ENCODE measurements at regions of chr6 and their contacts with region 1.

Region 1: DNA sequence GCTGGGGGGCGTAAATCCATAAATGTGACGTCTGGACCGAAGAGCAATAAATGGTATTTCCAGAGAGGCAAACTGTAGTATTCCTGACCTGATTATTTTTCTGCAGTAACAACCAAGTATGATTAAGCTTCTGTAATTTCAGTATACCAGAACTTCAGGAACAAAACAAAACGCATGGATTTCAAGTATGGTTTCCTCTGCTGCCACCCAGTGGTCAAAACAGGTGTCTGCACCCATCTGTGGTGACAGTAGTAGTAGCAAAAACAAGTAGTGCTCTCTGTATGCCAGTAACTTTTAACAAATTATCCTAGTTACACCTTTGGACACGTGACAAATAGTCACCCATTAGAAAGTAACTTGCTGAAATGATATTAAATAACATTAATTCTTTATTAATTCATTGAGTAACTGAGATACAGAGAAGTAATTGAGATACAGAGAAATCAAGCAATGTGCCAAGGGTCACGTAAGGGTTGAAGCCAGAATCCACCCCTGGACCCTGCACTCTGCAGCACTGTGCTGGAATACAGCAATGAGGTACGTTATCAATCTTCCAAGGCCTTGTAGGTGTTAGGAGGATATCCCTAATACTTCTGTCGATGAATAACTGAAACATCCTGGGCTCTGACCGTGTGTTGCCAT is 7.9 kb downstream of the CALHM4 start:
- DNase-seq: peak; percentile 62 to 84 (median 67)
- ATAC-seq: peak; percentile 82
- H3K4me3 ChIP-seq: no peak overlapping the region
- H3K27ac ChIP-seq: no peak overlapping the region
- H3K4me1 ChIP-seq: peaks cover 15 to 17% of the 10 kb centered on the region in 2 experiments; a peak in 4 of 5 replicates
- H3K27me3 ChIP-seq: no peaks in the 10 kb centered on the region
- CTCF ChIP-seq: peak; percentile 76 to 88 (median 84)
- EP300 ChIP-seq: no peak
- POLR2A ChIP-seq: no peak
- RAD21 ChIP-seq: peak; percentile 81 to 85

Region 2: GRCh38 chr6:116287689-116288282 is 273.7 kb before region 1 on chr6:
- CTCF ChIA-PET with region 1: no interaction called
- POLR2A ChIA-PET with region 1: no interaction called
- in situ Hi-C with region 1: loop called (anchors 10 kb)
- intact Hi-C with region 1: loop called (anchors 2 kb)
- DNase-seq: peak; percentile 27 to 47 (median 44)
- ATAC-seq: peak; percentile 88
- H3K4me3 ChIP-seq: no peak overlapping the region
- H3K27ac ChIP-seq: no peak overlapping the region
- H3K4me1 ChIP-seq: no peaks in the 10 kb centered on the region; a peak in 1 of 5 replicates
- H3K27me3 ChIP-seq: 0 out of 5 replicates have a peak, but pooled peaks cover 0 to 5% of the 10 kb centered on the region in 2 experiments
- CTCF ChIP-seq: peak; percentile 66 to 88 (median 74); a peak in 5 of 6 replicates
- EP300 ChIP-seq: no peak
- POLR2A ChIP-seq: no peak
- RAD21 ChIP-seq: peak; percentile 86 to 90

Region 3: DNA sequence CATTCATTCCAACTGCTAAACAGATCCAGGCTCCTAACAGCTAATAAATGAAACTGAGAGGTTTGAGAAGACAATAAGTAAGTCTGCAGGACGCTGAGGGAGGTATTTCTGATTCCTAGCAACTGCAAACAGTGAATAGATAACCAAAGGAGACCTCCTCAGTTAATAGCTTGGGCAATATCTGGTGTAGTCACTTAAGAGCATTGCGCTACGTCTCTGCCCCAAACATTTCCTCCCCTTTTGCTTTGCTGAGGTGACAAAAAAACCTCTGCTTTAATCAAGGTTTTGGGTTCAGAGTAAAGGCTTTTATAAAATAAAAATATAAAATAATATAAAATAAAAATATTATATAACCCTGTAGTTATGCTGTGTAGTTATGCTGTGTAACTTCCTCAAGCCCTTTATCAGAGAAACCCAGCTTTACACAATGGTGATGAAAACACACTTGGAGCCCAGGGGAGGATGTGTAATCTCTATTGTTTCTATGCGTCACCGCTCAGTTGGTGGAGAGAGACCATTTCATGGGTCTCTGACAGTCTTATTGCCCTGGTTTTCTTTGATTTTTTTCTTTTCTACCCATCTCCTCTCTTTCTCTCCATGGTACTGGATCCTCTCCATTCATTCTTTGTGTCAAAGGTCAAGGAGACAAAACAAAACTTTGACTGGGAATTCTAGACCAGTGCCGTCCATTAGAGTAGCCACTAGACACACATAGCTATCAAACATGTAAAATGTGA is 69.0 kb before region 1 on chr6:
- CTCF ChIA-PET with region 1: no interaction called
- POLR2A ChIA-PET with region 1: no interaction called
- in situ Hi-C with region 1: no loop called
- intact Hi-C with region 1: no loop called
- DNase-seq: peak; percentile 15 to 88 (median 44)
- ATAC-seq: peak; percentile 97
- H3K4me3 ChIP-seq: no peak overlapping the region
- H3K27ac ChIP-seq: peak overlapping the region; percentile 82
- H3K4me1 ChIP-seq: peaks cover 0 to 11% of the 10 kb centered on the region in 2 experiments; a peak in 3 of 5 replicates
- H3K27me3 ChIP-seq: no peaks in the 10 kb centered on the region
- CTCF ChIP-seq: no peak
- EP300 ChIP-seq: peak; percentile 82
- POLR2A ChIP-seq: no peak
- RAD21 ChIP-seq: no peak

Region 4: GRCh38 chr6:116741571-116741970 is 180.1 kb after region 1 on chr6:
- CTCF ChIA-PET with region 1: no interaction called
- POLR2A ChIA-PET with region 1: no interaction called
- in situ Hi-C with region 1: no loop called
- intact Hi-C with region 1: no loop called
- DNase-seq: no peak
- ATAC-seq: no peak
- H3K4me3 ChIP-seq: no peak overlapping the region
- H3K27ac ChIP-seq: no peak overlapping the region
- H3K4me1 ChIP-seq: no peaks in the 10 kb centered on the region
- H3K27me3 ChIP-seq: no peaks in the 10 kb centered on the region
- CTCF ChIP-seq: no peak
- EP300 ChIP-seq: no peak
- POLR2A ChIP-seq: no peak
- RAD21 ChIP-seq: no peak

Measured in K562 (cell line).